A673 (cell line): ENCODE measurements at regions of chr4 and their contacts with region 1.

Region 1: DNA sequence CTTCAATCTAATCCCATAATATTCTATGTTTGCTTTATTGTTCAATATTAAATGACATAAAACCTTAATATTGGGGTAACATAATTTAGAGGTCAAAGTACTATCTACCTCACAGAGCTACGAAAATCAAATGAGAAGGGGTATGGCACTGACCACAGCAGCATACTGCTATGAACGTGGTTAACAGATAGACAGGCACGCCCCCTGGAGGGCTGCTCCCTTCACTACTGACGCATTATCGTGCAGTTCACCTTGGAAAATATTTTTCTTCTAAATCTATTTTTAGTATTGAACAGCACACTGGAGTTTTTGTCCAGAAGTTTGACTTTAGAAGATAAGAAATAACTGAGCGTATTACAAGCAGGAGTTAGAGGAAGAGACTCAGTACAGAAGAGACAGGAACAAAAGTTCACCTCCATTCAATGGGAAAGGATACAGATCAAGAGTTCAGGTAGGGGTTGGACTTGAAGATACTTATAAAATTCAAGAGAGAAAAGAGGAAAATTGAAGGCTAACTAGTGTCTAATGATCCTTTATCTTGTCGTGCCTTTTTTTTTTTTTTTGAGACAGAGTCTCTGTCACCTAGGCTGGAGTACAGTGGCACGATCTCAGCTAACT is 22.7 kb downstream of the MAP9 start:
- DNase-seq: peak; percentile 55
- H3K4me3 ChIP-seq: no peak overlapping the region
- H3K27ac ChIP-seq: no peak overlapping the region
- H3K4me1 ChIP-seq: no peaks in the 10 kb centered on the region
- H3K27me3 ChIP-seq: no peaks in the 10 kb centered on the region
- CTCF ChIP-seq: peak; percentile 85

Region 2: GRCh38 chr4:154854362-154854761 is 499.7 kb before region 1 on chr4:
- CTCF ChIA-PET with region 1: no interaction called
- POLR2A ChIA-PET with region 1: no interaction called
- intact Hi-C with region 1: loop called (anchors 5 kb)
- DNase-seq: peak; percentile 21
- H3K4me3 ChIP-seq: no peak overlapping the region
- H3K27ac ChIP-seq: no peak overlapping the region
- H3K4me1 ChIP-seq: no peaks in the 10 kb centered on the region
- H3K27me3 ChIP-seq: no peaks in the 10 kb centered on the region
- CTCF ChIP-seq: peak; percentile 39; the same call in 1 of the 2 replicates

Region 3: GRCh38 chr4:154982187-154983047 is 371.6 kb before region 1 on chr4:
- CTCF ChIA-PET with region 1: no interaction called
- POLR2A ChIA-PET with region 1: no interaction called
- intact Hi-C with region 1: loop called (anchors 2 kb)
- DNase-seq: peak; percentile 66
- H3K4me3 ChIP-seq: no peak overlapping the region
- H3K27ac ChIP-seq: no peak overlapping the region
- H3K4me1 ChIP-seq: no peaks in the 10 kb centered on the region
- H3K27me3 ChIP-seq: no peaks in the 10 kb centered on the region
- CTCF ChIP-seq: peak; percentile 81